Thyroid gland (tissue), 4 donors: ENCODE measurements at regions of chr9 and their contacts with region 1.

Region 1: GRCh38 chr9:27726244-27727081 is 153.2 kb upstream of the C9orf72 start:
- DNase-seq: peak; percentile 54 to 71
- H3K4me3 ChIP-seq: no peak overlapping the region
- H3K27ac ChIP-seq: no peak overlapping the region
- H3K4me1 ChIP-seq: peaks cover 3% of the 10 kb centered on the region in 2 donors
- H3K27me3 ChIP-seq: no peaks in the 10 kb centered on the region
- CTCF ChIP-seq: peak; percentile 41 to 92 (median 84)
- POLR2A ChIP-seq: no peak

Region 2: GRCh38 chr9:27645161-27645840 is 81.2 kb before region 1 on chr9:
- intact Hi-C with region 1: no loop called
- DNase-seq: peak in 1 of 2 donors; percentile 5
- H3K4me3 ChIP-seq: no peak overlapping the region
- H3K27ac ChIP-seq: no peak overlapping the region
- H3K4me1 ChIP-seq: no peaks in the 10 kb centered on the region
- H3K27me3 ChIP-seq: no peaks in the 10 kb centered on the region
- CTCF ChIP-seq: no peak
- POLR2A ChIP-seq: no peak

Region 3: GRCh38 chr9:28073270-28073669 is 346.8 kb after region 1 on chr9:
- intact Hi-C with region 1: loop called (anchors 10 kb)
- DNase-seq: peak; percentile 35 to 50
- H3K4me3 ChIP-seq: no peak overlapping the region
- H3K27ac ChIP-seq: no peak overlapping the region
- H3K4me1 ChIP-seq: no peaks in the 10 kb centered on the region
- H3K27me3 ChIP-seq: no peaks in the 10 kb centered on the region
- CTCF ChIP-seq: peak in 3 of 6 experiments; percentile 66 to 82 (median 77)
- POLR2A ChIP-seq: no peak